ENCODE measurements at regions of chr20 and their contacts with region 1.

Region 1: DNA sequence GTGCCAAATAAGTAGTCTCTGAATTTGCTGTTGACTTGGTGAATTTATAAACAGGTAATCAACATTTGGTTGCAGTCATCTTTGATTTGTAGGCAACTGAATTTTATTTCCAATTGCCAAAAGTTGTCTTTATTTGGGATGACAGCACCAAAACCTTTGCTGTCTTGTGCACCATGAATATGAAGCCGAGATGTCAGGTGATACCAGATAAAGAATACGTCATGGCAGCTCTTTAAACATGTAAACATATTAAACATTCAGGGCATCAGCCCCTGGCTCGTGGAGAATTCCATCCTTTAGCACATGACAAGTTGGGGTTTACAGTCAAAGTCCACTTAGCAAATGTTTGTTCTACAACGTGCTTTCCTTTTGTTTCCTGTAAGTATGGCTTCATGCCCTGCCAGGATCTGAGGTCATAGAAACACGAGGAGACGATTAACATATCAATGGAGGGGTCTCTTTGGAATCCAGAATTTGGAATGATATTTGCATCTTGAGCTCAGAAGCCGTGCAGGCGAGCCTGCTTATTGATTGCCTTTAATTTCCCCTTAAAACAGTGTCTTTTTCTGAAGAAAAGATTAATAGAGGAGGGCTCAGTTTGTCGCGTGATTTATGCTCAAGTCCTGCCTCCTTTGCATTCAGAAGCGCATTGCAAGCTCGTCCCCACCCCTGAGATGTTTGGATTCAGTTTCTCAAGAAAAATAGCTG is 170.2 kb upstream of the ZNF217 start:
- DNase-seq: peak in 1 of 4 experiments; percentile 36
- ATAC-seq: peak; percentile 70
- H3K4me3 ChIP-seq: 0 out of 2 replicates have a peak overlapping the region, but pooled peaks have one; percentile 17
- H3K27ac ChIP-seq: peak overlapping the region; percentile 65; the same call in 2 of the 3 replicates
- H3K4me1 ChIP-seq: peaks cover 0 to 20% of the 10 kb centered on the region in 2 experiments; a peak in 4 of 5 replicates
- H3K27me3 ChIP-seq: no peaks in the 10 kb centered on the region
- CTCF ChIP-seq: 0 out of 6 replicates have a peak, but pooled peaks of 1 of the 3 experiments have one; percentile 3
- EP300 ChIP-seq: no peak
- POLR2A ChIP-seq: no peak
- RAD21 ChIP-seq: 0 out of 4 replicates have a peak, but pooled peaks of 1 of the 2 experiments have one; percentile 11

Region 2: DNA sequence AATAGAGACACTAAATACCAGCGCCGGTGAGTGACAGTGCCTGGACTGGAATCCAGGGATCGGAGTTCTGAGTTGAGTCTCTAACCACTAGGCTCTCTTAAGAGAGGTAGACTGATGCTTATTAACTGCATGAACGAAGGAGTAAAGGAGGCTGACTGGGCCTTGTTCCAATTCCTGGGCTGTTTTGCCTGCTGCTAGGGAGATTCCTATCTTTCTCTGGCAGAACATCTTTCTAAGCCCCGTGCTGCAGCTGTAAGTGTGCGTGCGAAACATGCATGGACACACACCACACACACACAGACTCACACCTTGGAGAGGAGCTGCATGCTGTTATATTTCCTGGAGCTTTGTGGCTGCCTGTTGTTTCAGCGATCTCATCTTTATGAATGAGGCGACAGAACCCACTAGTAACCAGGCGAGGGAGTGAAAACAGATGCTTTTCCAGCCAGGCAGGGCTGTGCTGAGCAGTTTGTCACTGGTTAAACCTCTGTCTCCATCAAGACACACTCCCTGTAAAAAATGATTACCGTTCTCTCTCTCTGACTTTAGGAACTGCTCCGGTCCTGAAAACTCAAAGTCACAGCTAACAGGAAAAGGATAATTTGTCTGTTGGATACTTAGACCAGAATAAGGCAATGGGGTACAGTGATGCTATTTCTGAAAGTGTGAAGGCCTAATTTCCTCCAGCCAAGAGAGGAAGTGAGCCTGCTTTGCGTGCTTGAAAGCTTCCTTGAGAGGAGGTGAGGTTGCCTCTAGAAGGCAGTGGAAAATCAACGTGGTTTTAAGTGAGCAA is 12.8 kb before region 1 on chr20:
- CTCF ChIA-PET with region 1: interaction called, 4 read pairs
- POLR2A ChIA-PET with region 1: interaction called, 13 read pairs
- in situ Hi-C with region 1: no loop called
- intact Hi-C with region 1: no loop called
- DNase-seq: peak in 2 of 4 experiments; percentile 28 to 68
- ATAC-seq: peak; percentile 61
- H3K4me3 ChIP-seq: no peak overlapping the region
- H3K27ac ChIP-seq: peak overlapping the region; percentile 92
- H3K4me1 ChIP-seq: peaks cover 16 to 39% of the 10 kb centered on the region in 2 experiments
- H3K27me3 ChIP-seq: no peaks in the 10 kb centered on the region
- CTCF ChIP-seq: no peak
- EP300 ChIP-seq: no peak
- POLR2A ChIP-seq: no peak
- RAD21 ChIP-seq: peak in 1 of 2 experiments; percentile 32; a peak in 1 of 4 replicates

Region 3: GRCh38 chr20:54122189-54122588 is 358.3 kb after region 1 on chr20:
- CTCF ChIA-PET with region 1: no interaction called
- POLR2A ChIA-PET with region 1: no interaction called
- in situ Hi-C with region 1: no loop called
- intact Hi-C with region 1: no loop called
- DNase-seq: no peak
- ATAC-seq: no peak
- H3K4me3 ChIP-seq: no peak overlapping the region
- H3K27ac ChIP-seq: no peak overlapping the region
- H3K4me1 ChIP-seq: no peaks in the 10 kb centered on the region; a peak in 1 of 5 replicates
- H3K27me3 ChIP-seq: peaks cover 3 to 5% of the 10 kb centered on the region in 2 experiments; a peak in 2 of 5 replicates
- CTCF ChIP-seq: no peak
- EP300 ChIP-seq: no peak
- POLR2A ChIP-seq: no peak
- RAD21 ChIP-seq: no peak